T-cell (primary cell): ENCODE measurements at regions of chr1 and their contacts with region 1.

Region 1: DNA sequence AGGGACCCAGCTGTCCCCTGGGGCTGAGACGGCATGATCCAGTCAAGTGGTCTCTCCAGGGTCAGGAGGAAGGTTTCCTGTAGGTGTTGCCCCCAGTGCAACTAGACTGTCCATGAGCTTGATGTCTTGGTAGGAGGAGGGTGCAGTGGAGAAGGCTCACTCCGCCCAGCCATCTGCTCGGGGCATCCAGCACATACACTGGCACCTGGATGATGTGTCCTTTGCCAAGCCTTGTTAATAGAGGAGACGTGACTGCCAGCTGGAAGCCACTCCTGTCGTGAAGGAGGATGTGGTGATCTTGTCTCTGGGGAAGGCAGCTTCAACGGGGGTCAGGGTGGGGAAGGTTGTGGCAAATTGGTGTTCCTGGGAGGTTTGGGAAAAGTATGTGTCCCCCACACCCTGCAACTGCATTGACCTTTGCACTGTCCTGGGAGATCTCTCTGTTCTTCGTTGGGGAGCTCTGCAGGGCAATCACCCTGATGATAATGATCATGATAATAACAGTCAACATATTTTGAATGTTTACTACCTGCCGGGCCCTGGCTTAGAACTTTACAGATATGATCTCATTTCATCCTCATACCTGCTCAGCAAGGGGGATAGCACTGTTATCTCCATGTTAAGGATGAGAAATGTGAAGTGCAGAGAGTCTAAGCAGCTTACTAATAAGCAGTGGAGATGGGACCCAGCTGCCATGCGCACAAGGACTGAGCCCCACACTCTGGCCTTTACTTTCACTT is 6.4 kb downstream of the DISP3 start:
- DNase-seq: no peak
- ATAC-seq: no peak
- H3K4me3 ChIP-seq: no peak overlapping the region
- H3K4me3 Mint-ChIP-seq: no peak overlapping the region
- H3K27ac ChIP-seq: no peak overlapping the region
- H3K27ac Mint-ChIP-seq: no peak overlapping the region
- H3K4me1 ChIP-seq: peaks cover 0 to under 1% of the 10 kb centered on the region in 2 experiments
- H3K4me1 Mint-ChIP-seq: peaks cover 5 to 9% (median 7%) of the 10 kb centered on the region in 3 donors
- H3K27me3 ChIP-seq: peaks cover 0 to 77% of the 10 kb centered on the region in 2 experiments
- H3K27me3 Mint-ChIP-seq: peaks cover 32 to 44% of the 10 kb centered on the region in 2 donors

Region 2: DNA sequence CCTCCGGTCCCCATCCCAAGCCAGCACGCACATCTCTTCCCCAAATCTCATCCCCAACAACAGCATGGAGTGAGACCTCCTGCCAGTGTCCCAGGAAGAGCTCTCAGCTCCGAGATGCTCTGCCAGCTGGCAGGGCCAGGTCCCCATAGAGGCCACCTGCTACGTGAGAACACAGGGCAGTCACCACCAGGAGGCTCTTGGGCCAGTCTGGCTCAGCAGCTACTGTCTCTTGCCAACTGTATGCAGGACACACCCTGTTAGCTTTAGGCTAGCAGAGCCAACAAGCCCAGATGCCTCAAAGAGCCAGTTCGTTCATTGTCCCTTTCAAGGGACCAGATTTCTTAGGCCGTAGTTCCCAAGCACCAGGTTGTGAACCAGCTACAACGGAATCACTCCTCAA is 131.9 kb after region 1 on chr1:
- CTCF ChIA-PET with region 1: no interaction called
- POLR2A ChIA-PET with region 1: interaction called in 1 of 2 experiments, 10 read pairs
- DNase-seq: no peak
- ATAC-seq: no peak
- H3K4me3 ChIP-seq: no peak overlapping the region
- H3K4me3 Mint-ChIP-seq: no peak overlapping the region
- H3K27ac ChIP-seq: no peak overlapping the region
- H3K27ac Mint-ChIP-seq: no peak overlapping the region
- H3K4me1 ChIP-seq: no peaks in the 10 kb centered on the region
- H3K4me1 Mint-ChIP-seq: no peaks in the 10 kb centered on the region
- H3K27me3 ChIP-seq: peaks cover 0 to 44% of the 10 kb centered on the region in 2 experiments
- H3K27me3 Mint-ChIP-seq: peaks cover 5 to 32% of the 10 kb centered on the region in 2 donors